Endothelial cell of umbilical vein (primary cell): ENCODE measurements at regions of chr19 and their contacts with region 1.

Region 1: GRCh38 chr19:13104360-13104847 is 1.7 kb upstream of the LYL1 start:
- DNase-seq: peak; percentile 94
- H3K4me3 ChIP-seq: no peak overlapping the region
- H3K27ac ChIP-seq: peak overlapping the region; percentile 60
- H3K4me1 ChIP-seq: peaks cover 41% of the 10 kb centered on the region
- H3K27me3 ChIP-seq: no peaks in the 10 kb centered on the region
- CTCF ChIP-seq: peak; percentile 85 to 95
- POLR2A ChIP-seq: peak; percentile 80

Region 2: GRCh38 chr19:12782229-12783028 is 322.0 kb before region 1 on chr19:
- CTCF ChIA-PET with region 1: no interaction called
- POLR2A ChIA-PET with region 1: no interaction called
- dilution Hi-C with region 1: no loop called
- intact Hi-C with region 1: loop called (anchors 2 kb)
- DNase-seq: peak; percentile 96
- H3K4me3 ChIP-seq: peak overlapping the region in 2 of 3 experiments; percentile 2 to 39
- H3K27ac ChIP-seq: peak overlapping the region; percentile 50
- H3K4me1 ChIP-seq: peaks cover 25% of the 10 kb centered on the region
- H3K27me3 ChIP-seq: no peaks in the 10 kb centered on the region
- CTCF ChIP-seq: peak in 1 of 2 donors; percentile 11
- POLR2A ChIP-seq: no peak

Region 3: DNA sequence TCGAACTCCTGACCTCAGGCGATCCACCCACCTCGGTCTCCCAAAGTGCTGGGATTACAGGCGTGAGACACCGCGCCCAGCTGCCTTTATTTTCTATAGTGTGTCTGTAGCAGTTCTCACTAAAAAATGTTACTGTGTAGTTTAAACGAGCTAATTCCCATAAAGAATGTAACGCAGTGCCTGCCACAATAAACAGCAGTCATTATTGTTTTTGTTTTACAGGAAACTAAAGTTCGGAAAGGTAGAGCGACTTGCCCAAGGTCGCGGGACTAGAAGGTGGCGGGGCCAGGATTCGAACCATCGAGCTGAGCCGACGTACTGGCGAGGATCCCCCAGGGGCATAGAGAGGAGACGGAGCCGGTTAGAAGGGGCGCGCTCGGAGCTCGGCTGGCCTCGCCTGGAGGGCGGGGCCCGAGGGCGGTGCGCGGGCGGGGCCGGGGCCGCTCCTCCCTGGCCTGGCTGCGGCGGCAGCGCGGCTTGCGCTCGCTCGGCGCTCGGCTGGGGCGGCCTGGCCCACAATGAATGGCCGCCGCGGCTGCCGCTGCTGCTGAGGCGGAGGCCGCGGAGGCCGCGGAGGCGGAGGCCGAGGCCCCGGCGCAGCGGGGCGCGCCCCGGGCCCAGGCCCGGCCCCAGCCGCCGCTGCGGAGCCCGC is 13.5 kb after region 1 on chr19 and contains the start of gene NACC1:
- CTCF ChIA-PET with region 1: interaction called, 24 read pairs
- POLR2A ChIA-PET with region 1: interaction called, 3 read pairs
- dilution Hi-C with region 1: no loop called
- intact Hi-C with region 1: loop called (anchors 1 kb)
- DNase-seq: peak; percentile 87
- H3K4me3 ChIP-seq: peak within 1 kb of the TSS; percentile 64 to 99 (median 81)
- H3K27ac ChIP-seq: peak within 1 kb of the TSS; percentile 57
- H3K4me1 ChIP-seq: peaks cover 13% of the 10 kb centered on the region
- H3K27me3 ChIP-seq: no peaks in the 10 kb centered on the region
- CTCF ChIP-seq: no peak
- POLR2A ChIP-seq: no peak
- total RNA-seq, gene NACC1: 95.4 and 97.6 TPM in 2 replicates

Region 4: DNA sequence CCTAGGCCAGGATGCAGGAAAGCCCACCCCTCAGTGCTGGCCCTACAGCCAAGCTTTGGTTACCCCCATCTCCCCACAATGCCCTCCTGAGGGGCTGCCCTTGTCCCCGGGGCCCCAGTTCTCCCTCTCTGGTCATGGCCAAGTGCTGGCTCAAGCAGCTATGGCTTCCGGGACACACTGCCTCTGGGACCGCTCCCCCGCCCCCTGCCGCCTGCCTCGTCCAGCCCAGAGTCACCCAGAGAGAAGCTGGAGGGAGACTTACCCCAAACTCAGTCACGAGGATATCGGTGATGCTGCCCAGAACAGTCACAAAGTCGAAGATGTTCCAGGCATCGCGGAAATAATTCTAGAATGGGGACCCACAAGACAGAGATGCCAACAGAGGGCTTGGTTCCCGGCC is 140.5 kb after region 1 on chr19:
- CTCF ChIA-PET with region 1: interaction called, 4 read pairs
- POLR2A ChIA-PET with region 1: no interaction called
- dilution Hi-C with region 1: no loop called
- intact Hi-C with region 1: loop called (anchors 5 kb)
- DNase-seq: no peak
- H3K4me3 ChIP-seq: no peak overlapping the region
- H3K27ac ChIP-seq: no peak overlapping the region
- H3K4me1 ChIP-seq: peaks cover 3% of the 10 kb centered on the region
- H3K27me3 ChIP-seq: no peaks in the 10 kb centered on the region
- CTCF ChIP-seq: no peak
- POLR2A ChIP-seq: no peak